Caco-2 (cell line): ENCODE measurements at regions of chr1 and their contacts with region 1.

Region 1: DNA sequence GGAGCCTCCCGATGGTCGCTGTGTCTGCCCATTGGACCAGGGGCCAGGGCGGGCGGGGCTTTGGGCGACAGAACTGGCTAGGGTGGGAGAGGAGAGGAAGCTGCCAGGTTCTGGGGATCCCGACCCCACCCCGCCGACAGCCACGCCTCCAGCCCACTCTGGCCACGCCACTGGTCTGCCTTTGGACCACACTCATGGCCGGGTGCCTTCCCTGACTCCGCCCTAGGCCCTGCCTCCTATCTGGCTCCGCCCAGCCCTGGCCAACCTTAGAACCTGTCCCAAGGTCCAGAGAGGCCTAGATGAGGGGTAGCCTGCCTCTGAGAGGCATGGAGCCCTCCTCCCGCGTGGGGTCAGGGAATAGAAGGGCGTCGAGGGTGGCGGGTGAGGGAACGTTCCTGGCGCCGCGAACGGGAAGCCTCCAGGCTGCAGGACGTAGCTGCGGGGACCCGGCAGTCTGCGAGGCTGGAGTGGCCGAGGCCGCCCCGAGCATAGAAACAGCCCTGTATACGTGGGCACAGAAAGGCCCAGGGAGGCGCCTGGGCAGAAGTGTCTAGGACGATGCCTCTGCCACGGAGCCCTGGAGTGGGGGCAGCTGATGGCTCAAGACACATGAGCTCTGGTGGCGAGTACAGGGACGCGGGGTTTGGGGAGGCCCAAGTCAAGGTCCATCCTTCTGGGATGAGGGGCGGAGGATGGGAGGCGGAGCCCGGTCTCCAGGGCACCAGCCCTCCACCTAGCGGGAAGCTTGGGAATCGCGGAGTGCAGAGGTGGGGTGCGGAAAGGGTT is 11.5 kb upstream of the COL16A1 start:
- DNase-seq: peak; percentile 79 to 90
- H3K4me3 ChIP-seq: peak overlapping the region; percentile 43
- H3K4me3 Mint-ChIP-seq: peak overlapping the region; percentile 89
- H3K27ac Mint-ChIP-seq: peak overlapping the region; percentile 67
- H3K4me1 ChIP-seq: peaks cover 23% of the 10 kb centered on the region
- H3K4me1 Mint-ChIP-seq: peaks cover 11% of the 10 kb centered on the region
- H3K27me3 ChIP-seq: no peaks in the 10 kb centered on the region
- H3K27me3 Mint-ChIP-seq: no peaks in the 10 kb centered on the region
- CTCF ChIP-seq: peak; percentile 60 to 66

Region 2: DNA sequence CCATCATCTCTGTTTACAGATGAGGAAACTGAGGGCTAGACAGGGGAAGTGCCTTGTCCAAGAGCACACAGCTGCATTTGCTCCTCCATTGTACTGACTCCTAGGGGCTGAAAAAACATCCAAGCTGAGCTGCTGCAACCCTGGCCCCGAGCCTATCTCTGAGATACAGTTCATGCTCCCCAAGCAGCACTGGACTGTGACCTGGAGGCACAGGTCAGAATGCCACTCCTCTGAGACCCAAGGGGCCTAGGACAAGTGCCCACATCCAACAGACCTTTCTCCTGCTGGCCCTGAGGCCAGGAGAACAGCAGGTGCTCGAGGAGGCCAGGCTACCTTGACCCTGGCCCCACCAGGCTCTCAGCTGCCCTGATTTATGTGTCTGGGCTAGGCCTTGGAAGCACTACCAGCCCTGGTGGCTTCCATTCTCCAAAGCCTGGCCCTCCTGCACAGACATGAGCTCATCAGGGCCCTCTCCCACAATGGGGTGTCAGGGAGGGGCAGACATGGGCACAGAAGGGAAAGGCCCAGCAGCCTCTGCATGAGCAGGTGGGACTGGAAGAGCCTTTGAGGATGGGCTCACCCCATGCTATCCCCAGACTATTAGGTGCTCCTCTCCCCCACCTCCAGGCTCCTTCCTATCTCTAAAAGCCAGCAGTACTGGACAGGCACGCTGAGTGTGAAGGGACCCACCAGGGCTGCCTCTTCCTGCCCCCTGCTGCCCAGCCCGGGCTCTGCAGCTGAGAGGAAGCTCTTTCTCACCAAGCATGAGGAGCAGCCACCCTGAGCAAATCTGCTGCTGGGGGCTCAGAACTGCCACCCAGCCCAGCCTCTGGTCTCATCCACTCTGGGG is 30.0 kb after region 1 on chr1:
- CTCF ChIA-PET with region 1: interaction called, 12 read pairs
- POLR2A ChIA-PET with region 1: no interaction called
- intact Hi-C with region 1: no loop called
- DNase-seq: peak; percentile 52 to 60
- H3K4me3 ChIP-seq: no peak overlapping the region
- H3K4me3 Mint-ChIP-seq: no peak overlapping the region
- H3K27ac Mint-ChIP-seq: no peak overlapping the region
- H3K4me1 ChIP-seq: peaks cover 5% of the 10 kb centered on the region
- H3K4me1 Mint-ChIP-seq: peaks cover 14% of the 10 kb centered on the region
- H3K27me3 ChIP-seq: no peaks in the 10 kb centered on the region
- H3K27me3 Mint-ChIP-seq: no peaks in the 10 kb centered on the region
- CTCF ChIP-seq: peak; percentile 40 to 45